MCF 10A (cell line): ENCODE measurements at regions of chr1 and their contacts with region 1.

Region 1: GRCh38 chr1:216566641-216567205 is 143.5 kb upstream of the USH2A start:
- DNase-seq: peak; percentile 58
- H3K4me3 Mint-ChIP-seq: no peak overlapping the region
- H3K27ac Mint-ChIP-seq: no peak overlapping the region
- H3K4me1 Mint-ChIP-seq: no peaks in the 10 kb centered on the region
- H3K27me3 Mint-ChIP-seq: peaks cover 93% of the 10 kb centered on the region
- CTCF ChIP-seq: peak; percentile 66

Region 2: GRCh38 chr1:215682232-215682631 is 884.5 kb before region 1 on chr1:
- CTCF ChIA-PET with region 1: no interaction called
- POLR2A ChIA-PET with region 1: no interaction called
- intact Hi-C with region 1: loop called (anchors 10 kb)
- DNase-seq: peak; percentile 33
- H3K4me3 Mint-ChIP-seq: no peak overlapping the region
- H3K27ac Mint-ChIP-seq: no peak overlapping the region
- H3K4me1 Mint-ChIP-seq: no peaks in the 10 kb centered on the region
- H3K27me3 Mint-ChIP-seq: peaks cover 47% of the 10 kb centered on the region
- CTCF ChIP-seq: peak; percentile 44

Region 3: GRCh38 chr1:215992620-215993019 is 574.1 kb before region 1 on chr1:
- CTCF ChIA-PET with region 1: no interaction called
- POLR2A ChIA-PET with region 1: no interaction called
- intact Hi-C with region 1: loop called (anchors 5 kb)
- DNase-seq: peak; percentile 63
- H3K4me3 Mint-ChIP-seq: no peak overlapping the region
- H3K27ac Mint-ChIP-seq: no peak overlapping the region
- H3K4me1 Mint-ChIP-seq: no peaks in the 10 kb centered on the region
- H3K27me3 Mint-ChIP-seq: peaks cover 75% of the 10 kb centered on the region
- CTCF ChIP-seq: peak; percentile 69

Region 4: DNA sequence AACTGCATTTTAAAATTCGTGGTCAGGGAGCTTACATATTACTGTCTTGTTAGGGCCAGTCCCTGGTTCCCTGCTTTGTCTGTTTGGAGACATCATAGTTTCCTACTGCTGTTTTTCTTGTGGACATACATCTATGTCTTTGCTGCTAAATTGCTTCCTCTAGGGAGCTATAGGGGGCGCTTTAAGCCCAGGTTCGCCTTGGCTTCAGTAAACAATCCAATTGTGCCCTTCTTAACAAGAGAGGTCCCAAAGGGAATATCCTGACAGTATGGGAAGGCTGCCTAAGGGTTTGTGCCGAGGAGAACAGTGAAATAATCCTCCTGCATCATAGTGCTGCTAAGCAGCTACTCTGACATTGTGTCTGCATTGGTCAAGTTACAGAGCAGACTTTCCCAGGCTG is 255.9 kb before region 1 on chr1:
- CTCF ChIA-PET with region 1: interaction called, 4 read pairs
- POLR2A ChIA-PET with region 1: no interaction called
- intact Hi-C with region 1: loop called (anchors 1 kb)
- DNase-seq: peak; percentile 75
- H3K4me3 Mint-ChIP-seq: no peak overlapping the region
- H3K27ac Mint-ChIP-seq: no peak overlapping the region
- H3K4me1 Mint-ChIP-seq: no peaks in the 10 kb centered on the region
- H3K27me3 Mint-ChIP-seq: peaks cover 77% of the 10 kb centered on the region
- CTCF ChIP-seq: peak; percentile 95

Region 5: GRCh38 chr1:216447907-216448568 is 118.7 kb before region 1 on chr1:
- CTCF ChIA-PET with region 1: no interaction called
- POLR2A ChIA-PET with region 1: no interaction called
- intact Hi-C with region 1: no loop called
- DNase-seq: no peak
- H3K4me3 Mint-ChIP-seq: no peak overlapping the region
- H3K27ac Mint-ChIP-seq: no peak overlapping the region
- H3K4me1 Mint-ChIP-seq: peaks cover 6% of the 10 kb centered on the region
- H3K27me3 Mint-ChIP-seq: peaks cover 59% of the 10 kb centered on the region
- CTCF ChIP-seq: no peak

Region 6: GRCh38 chr1:216554934-216555333 is 11.8 kb before region 1 on chr1:
- CTCF ChIA-PET with region 1: interaction called, 21 read pairs
- POLR2A ChIA-PET with region 1: no interaction called
- intact Hi-C with region 1: no loop called
- DNase-seq: no peak
- H3K4me3 Mint-ChIP-seq: no peak overlapping the region
- H3K27ac Mint-ChIP-seq: no peak overlapping the region
- H3K4me1 Mint-ChIP-seq: no peaks in the 10 kb centered on the region
- H3K27me3 Mint-ChIP-seq: peaks cover 67% of the 10 kb centered on the region
- CTCF ChIP-seq: no peak